B cell (primary cell): ENCODE measurements at regions of chr1 and their contacts with region 1.

Region 1: DNA sequence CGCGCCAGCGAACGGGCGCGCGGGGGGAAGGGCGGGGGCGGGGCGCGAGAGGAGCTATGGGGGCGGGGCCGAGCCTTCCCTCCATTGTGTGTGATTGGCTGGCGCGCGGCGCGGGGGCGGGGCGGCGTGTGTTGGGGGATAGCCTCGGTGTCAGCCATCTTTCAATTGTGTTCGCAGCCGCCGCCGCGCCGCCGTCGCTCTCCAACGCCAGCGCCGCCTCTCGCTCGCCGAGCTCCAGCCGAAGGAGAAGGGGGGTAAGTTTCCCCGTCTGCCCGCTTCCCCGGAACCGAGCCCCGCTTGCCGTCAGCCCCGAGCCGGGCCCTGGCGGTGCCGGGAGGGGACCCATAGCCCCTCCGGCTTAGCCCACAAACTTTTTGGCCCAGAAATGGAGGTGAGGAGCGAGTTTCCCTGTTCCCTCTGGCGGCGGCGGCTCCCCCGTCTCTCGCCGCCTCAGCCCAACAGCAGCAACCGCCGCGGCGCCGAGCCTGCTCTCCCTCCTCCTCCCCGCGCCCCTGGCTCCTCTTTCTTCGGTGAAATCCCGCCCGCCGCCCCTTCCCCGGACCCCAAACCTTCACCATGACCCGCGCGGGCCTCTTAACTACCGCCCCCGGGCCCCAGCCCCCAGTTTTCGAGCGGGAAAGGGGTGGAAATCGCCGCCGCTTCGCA is at the start of gene H3-3A:
- DNase-seq: peak; percentile 98
- ATAC-seq: peak; percentile 81
- H3K4me3 ChIP-seq: peak within 1 kb of the TSS; percentile 86 to 100 (median 96)
- H3K4me3 Mint-ChIP-seq: peak within 1 kb of the TSS; percentile 100
- H3K27ac ChIP-seq: peak within 1 kb of the TSS; percentile 93 to 96
- H3K27ac Mint-ChIP-seq: peak within 1 kb of the TSS; percentile 99
- H3K4me1 ChIP-seq: peaks cover 33 to 34% of the 10 kb centered on the region in 2 donors
- H3K4me1 Mint-ChIP-seq: peaks cover 46% of the 10 kb centered on the region
- H3K27me3 ChIP-seq: no peaks in the 10 kb centered on the region
- H3K27me3 Mint-ChIP-seq: no peaks in the 10 kb centered on the region
- CTCF ChIP-seq: no peak
- total RNA-seq, gene H3-3A: 519 and 561 TPM in 2 replicates

Region 2: DNA sequence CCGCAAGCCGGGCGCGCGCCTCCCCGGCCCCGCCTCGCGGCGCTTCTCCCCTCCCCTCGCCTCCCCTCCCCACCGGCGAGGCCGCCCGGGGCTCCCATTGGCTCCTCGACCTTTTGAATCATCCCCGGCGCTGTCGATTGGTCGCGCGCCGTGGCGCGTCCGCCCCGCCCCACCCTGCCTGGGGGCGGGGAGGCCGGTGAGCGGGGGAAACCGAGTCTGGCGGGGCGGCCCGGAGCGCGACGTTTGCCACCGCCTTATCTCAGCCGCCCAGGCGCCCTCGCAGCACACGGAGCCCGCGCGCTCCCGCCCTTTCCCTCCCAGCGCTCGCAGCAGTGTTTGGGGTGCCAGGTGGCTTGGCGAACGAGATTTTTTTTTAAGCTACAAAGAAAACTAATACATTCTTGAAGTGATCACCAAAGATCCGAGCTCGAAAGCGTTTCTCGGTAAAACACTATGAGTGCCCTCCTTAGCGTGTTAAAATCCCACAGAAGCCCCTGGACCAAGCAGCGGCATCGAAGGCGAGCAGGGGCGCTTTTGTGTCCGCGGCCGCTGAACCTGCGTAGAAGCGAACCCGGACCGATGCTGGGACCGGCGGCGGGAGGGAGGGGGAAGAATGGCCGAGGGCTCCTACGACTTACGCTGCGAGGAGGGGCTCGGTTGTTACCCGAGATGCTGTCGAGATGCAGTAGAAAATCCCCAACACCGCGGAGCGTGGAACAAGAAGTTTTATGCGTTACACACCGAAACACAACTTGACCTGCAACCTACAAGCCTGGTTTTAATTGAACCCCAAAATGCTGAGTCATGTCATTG is 634.4 kb before region 1 on chr1:
- CTCF ChIA-PET with region 1: interaction called, 3 read pairs
- POLR2A ChIA-PET with region 1: interaction called, 3 read pairs
- intact Hi-C with region 1: loop called (anchors 2 kb)
- DNase-seq: peak; percentile 92
- ATAC-seq: peak; percentile 90
- H3K4me3 ChIP-seq: peak overlapping the region; percentile 74 to 93 (median 91)
- H3K4me3 Mint-ChIP-seq: peak overlapping the region; percentile 85
- H3K27ac ChIP-seq: peak overlapping the region; percentile 78 to 83
- H3K27ac Mint-ChIP-seq: peak overlapping the region; percentile 80
- H3K4me1 ChIP-seq: peaks cover 36 to 41% of the 10 kb centered on the region in 2 donors
- H3K4me1 Mint-ChIP-seq: peaks cover 45% of the 10 kb centered on the region
- H3K27me3 ChIP-seq: no peaks in the 10 kb centered on the region
- H3K27me3 Mint-ChIP-seq: no peaks in the 10 kb centered on the region
- CTCF ChIP-seq: no peak

Region 3: GRCh38 chr1:225987491-225988316 is 75.0 kb before region 1 on chr1:
- CTCF ChIA-PET with region 1: interaction called, 73 read pairs
- POLR2A ChIA-PET with region 1: interaction called, 7 read pairs
- intact Hi-C with region 1: no loop called
- DNase-seq: peak; percentile 61
- ATAC-seq: peak; percentile 67
- H3K4me3 ChIP-seq: no peak overlapping the region
- H3K4me3 Mint-ChIP-seq: no peak overlapping the region
- H3K27ac ChIP-seq: no peak overlapping the region
- H3K27ac Mint-ChIP-seq: peak overlapping the region; percentile 37
- H3K4me1 ChIP-seq: peaks cover 0 to 4% of the 10 kb centered on the region in 2 donors
- H3K4me1 Mint-ChIP-seq: peaks cover 25% of the 10 kb centered on the region
- H3K27me3 ChIP-seq: no peaks in the 10 kb centered on the region
- H3K27me3 Mint-ChIP-seq: no peaks in the 10 kb centered on the region
- CTCF ChIP-seq: peak; percentile 87

Region 4: DNA sequence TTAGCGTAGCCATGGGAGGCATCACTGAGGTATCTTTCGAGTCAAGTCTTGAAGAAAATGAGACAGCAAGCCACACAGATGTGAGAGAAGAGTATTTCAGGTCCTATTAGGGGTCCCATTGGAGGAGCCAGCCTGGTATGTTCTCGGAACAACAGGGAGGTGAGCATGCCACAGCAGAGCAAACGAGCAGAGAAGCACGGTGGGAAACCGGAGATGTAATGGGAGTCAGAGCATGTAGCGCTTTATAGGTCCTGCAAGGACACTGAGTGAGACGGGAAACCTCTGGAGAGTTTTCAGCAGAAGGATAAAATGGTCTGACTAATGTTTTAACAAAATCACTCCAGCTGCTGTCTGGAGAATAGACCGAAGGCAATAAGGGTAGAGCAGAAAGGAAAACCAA is 15.7 kb after region 1 on chr1:
- CTCF ChIA-PET with region 1: interaction called, 38 read pairs
- POLR2A ChIA-PET with region 1: interaction called, 14 read pairs
- intact Hi-C with region 1: loop called (anchors 1 kb)
- DNase-seq: no peak
- ATAC-seq: no peak
- H3K4me3 ChIP-seq: no peak overlapping the region
- H3K4me3 Mint-ChIP-seq: no peak overlapping the region
- H3K27ac ChIP-seq: no peak overlapping the region
- H3K27ac Mint-ChIP-seq: no peak overlapping the region
- H3K4me1 ChIP-seq: peaks cover 6 to 7% of the 10 kb centered on the region in 2 donors
- H3K4me1 Mint-ChIP-seq: peaks cover 7% of the 10 kb centered on the region
- H3K27me3 ChIP-seq: no peaks in the 10 kb centered on the region
- H3K27me3 Mint-ChIP-seq: no peaks in the 10 kb centered on the region
- CTCF ChIP-seq: no peak

Region 5: GRCh38 chr1:226109829-226110248 is 47.1 kb after region 1 on chr1:
- CTCF ChIA-PET with region 1: interaction called, 107 read pairs
- POLR2A ChIA-PET with region 1: interaction called, 20 read pairs
- intact Hi-C with region 1: loop called (anchors 1 kb)
- DNase-seq: peak; percentile 93
- ATAC-seq: peak; percentile 64
- H3K4me3 ChIP-seq: peak overlapping the region in 4 of 5 experiments; percentile 57 to 85 (median 72)
- H3K4me3 Mint-ChIP-seq: peak overlapping the region; percentile 96
- H3K27ac ChIP-seq: peak overlapping the region; percentile 96 to 99
- H3K27ac Mint-ChIP-seq: peak overlapping the region; percentile 98
- H3K4me1 ChIP-seq: peaks cover 36 to 44% of the 10 kb centered on the region in 2 donors
- H3K4me1 Mint-ChIP-seq: peaks cover 42% of the 10 kb centered on the region
- H3K27me3 ChIP-seq: no peaks in the 10 kb centered on the region
- H3K27me3 Mint-ChIP-seq: no peaks in the 10 kb centered on the region
- CTCF ChIP-seq: no peak

Region 6: GRCh38 chr1:226201029-226201593 is 138.4 kb after region 1 on chr1:
- CTCF ChIA-PET with region 1: interaction called, 12 read pairs
- POLR2A ChIA-PET with region 1: no interaction called
- intact Hi-C with region 1: loop called (anchors 2 kb)
- DNase-seq: no peak
- ATAC-seq: no peak
- H3K4me3 ChIP-seq: no peak overlapping the region
- H3K4me3 Mint-ChIP-seq: no peak overlapping the region
- H3K27ac ChIP-seq: no peak overlapping the region
- H3K27ac Mint-ChIP-seq: peak overlapping the region; percentile 32
- H3K4me1 ChIP-seq: peaks cover 13 to 17% of the 10 kb centered on the region in 2 donors
- H3K4me1 Mint-ChIP-seq: peaks cover 23% of the 10 kb centered on the region
- H3K27me3 ChIP-seq: no peaks in the 10 kb centered on the region
- H3K27me3 Mint-ChIP-seq: peaks cover 3% of the 10 kb centered on the region
- CTCF ChIP-seq: peak; percentile 22